ENCODE measurements at regions of chr9 and their contacts with region 1.

Region 1: GRCh38 chr9:5608298-5609225 is 20.3 kb upstream of the RIC1 start:
- DNase-seq: no peak
- H3K4me3 ChIP-seq: peak overlapping the region; percentile 49 to 64
- H3K27ac ChIP-seq: peak overlapping the region; percentile 84 to 85
- H3K4me1 ChIP-seq: peaks cover 0 to 13% of the 10 kb centered on the region in 2 donors
- H3K27me3 ChIP-seq: no peaks in the 10 kb centered on the region
- CTCF ChIP-seq: peak in 1 of 3 experiments; percentile 25

Region 2: GRCh38 chr9:4750023-4750673 is 858.4 kb before region 1 on chr9:
- intact Hi-C with region 1: loop called (anchors 5 kb)
- DNase-seq: no peak
- H3K4me3 ChIP-seq: no peak overlapping the region
- H3K27ac ChIP-seq: no peak overlapping the region
- H3K4me1 ChIP-seq: no peaks in the 10 kb centered on the region
- H3K27me3 ChIP-seq: no peaks in the 10 kb centered on the region
- CTCF ChIP-seq: peak; percentile 41 to 67 (median 67)

Region 3: DNA sequence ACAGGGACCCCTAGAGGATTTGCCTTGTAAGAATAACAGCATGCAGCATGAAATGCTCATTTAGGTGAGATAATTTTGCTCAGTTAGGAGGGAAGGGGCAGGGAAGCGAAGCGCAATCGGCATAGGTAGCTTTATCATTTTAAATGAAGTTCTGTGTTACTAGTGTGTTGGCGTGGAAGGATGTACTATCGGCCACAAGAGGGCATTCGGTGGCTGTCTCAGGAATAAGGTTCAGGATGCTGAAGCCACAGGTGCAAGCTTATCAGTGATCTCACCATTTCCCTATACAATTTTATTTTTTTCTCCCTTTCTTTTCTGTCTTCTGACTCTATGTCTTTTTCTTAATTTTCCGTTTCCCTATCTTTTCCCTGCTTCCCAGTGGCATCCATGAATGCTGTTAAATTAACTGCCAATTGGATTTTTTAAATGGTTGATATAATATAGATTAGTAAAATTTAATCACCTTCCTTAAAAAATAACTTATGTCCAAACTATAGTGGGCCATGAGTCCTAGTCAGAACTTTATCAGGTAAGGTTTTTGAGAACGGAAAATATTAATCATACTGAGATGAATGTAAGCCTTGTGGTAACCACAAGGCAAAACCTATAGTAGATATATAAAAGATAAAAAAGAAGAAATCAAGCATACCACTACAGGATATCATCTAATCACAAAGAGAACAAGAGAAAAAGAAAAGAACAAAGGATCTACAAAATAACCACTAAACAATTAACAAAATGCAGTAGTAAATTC is 422.0 kb before region 1 on chr9:
- intact Hi-C with region 1: loop called (anchors 10 kb)
- DNase-seq: no peak
- H3K4me3 ChIP-seq: no peak overlapping the region
- H3K27ac ChIP-seq: no peak overlapping the region
- H3K4me1 ChIP-seq: no peaks in the 10 kb centered on the region
- H3K27me3 ChIP-seq: no peaks in the 10 kb centered on the region
- CTCF ChIP-seq: peak in 2 of 3 experiments; percentile 39 to 54

Region 4: DNA sequence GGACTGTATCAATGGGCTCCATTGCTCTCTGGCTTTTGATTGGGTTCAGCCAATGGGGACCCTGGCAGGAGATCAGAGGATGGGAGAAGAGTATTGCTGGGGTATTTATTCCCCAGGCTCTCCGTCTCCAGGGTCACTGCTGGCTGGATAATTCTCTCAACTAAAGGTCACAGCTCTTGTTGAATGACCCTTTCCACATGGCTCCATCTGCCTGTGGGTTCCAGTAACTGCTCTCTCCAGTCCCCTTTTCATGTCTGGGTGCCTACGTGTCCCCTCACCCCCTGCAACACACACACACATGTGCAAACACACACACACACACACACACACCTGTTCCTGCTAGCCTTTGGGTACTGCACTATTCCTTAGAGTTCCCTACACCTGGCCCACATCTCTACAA is 33.6 kb before region 1 on chr9:
- intact Hi-C with region 1: no loop called
- DNase-seq: no peak
- H3K4me3 ChIP-seq: no peak overlapping the region
- H3K27ac ChIP-seq: no peak overlapping the region
- H3K4me1 ChIP-seq: no peaks in the 10 kb centered on the region
- H3K27me3 ChIP-seq: no peaks in the 10 kb centered on the region
- CTCF ChIP-seq: no peak

Region 5: GRCh38 chr9:5764130-5764868 is 155.7 kb after region 1 on chr9:
- intact Hi-C with region 1: no loop called
- DNase-seq: no peak
- H3K4me3 ChIP-seq: no peak overlapping the region
- H3K27ac ChIP-seq: no peak overlapping the region
- H3K4me1 ChIP-seq: no peaks in the 10 kb centered on the region
- H3K27me3 ChIP-seq: no peaks in the 10 kb centered on the region
- CTCF ChIP-seq: no peak